SK-N-SH (cell line): ENCODE measurements at regions of chr15 and their contacts with region 1.

Region 1: DNA sequence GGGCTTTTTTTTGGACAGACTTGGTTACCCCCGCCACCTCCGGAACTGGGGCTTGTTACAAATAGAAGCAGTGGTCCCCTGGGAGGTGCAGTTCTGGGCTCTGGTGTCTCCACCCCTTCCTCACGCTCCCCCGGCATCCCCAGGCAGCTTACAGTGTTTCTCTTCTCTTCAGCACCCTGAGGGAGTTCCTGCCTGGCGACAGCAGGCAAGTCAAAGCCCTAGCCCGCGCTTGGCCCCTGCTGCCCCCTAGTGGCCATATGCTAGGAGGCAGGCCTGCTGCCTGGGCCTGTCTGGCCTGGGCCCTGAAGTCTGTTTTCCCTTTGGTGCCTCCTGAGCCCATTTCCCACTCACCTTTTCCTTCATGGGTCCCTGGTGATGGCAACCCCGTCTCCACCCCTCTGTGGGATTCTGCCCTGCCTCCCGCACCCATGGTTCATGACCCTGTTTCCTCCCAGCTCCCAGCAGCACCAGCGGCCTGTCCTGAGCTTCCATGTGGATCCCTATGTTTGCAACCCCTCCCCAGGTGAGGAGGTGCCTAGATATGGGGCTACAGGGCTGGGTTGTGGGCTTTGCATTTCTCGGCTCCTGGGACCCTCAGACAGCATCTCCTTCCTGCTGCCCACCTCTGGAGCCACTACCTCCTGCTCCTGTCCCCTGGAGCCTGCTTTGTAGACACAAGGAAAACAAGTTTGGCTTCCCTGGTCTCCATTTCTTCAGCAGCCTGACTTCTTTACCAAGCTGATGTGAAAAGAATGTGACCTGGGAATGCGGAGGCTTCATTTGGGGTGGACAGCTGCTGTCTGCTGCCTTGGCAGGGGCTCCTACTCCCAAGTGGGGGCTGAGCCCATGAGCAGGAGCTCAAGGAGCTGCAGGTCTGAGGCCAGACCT is 2.2 kb downstream of the SNX22 start:
- DNase-seq: peak; percentile 92
- H3K4me3 ChIP-seq: no peak overlapping the region; a peak in 1 of 4 replicates
- H3K27ac ChIP-seq: peak overlapping the region; percentile 35 to 63
- H3K4me1 ChIP-seq: peaks cover 0 to 22% of the 10 kb centered on the region in 2 experiments; a peak in 1 of 4 replicates
- H3K27me3 ChIP-seq: no peaks in the 10 kb centered on the region
- CTCF ChIP-seq: peak; percentile 96
- EP300 ChIP-seq: no peak
- RAD21 ChIP-seq: peak; percentile 89

Region 2: GRCh38 chr15:62828364-62828763 is 1325.4 kb before region 1 on chr15:
- CTCF ChIA-PET with region 1: no interaction called
- POLR2A ChIA-PET with region 1: no interaction called
- DNase-seq: no peak
- H3K4me3 ChIP-seq: no peak overlapping the region
- H3K27ac ChIP-seq: no peak overlapping the region
- H3K4me1 ChIP-seq: peaks cover 5 to 6% of the 10 kb centered on the region in 2 experiments; a peak in 1 of 4 replicates
- H3K27me3 ChIP-seq: no peaks in the 10 kb centered on the region
- CTCF ChIP-seq: no peak
- EP300 ChIP-seq: no peak
- RAD21 ChIP-seq: no peak

Region 3: DNA sequence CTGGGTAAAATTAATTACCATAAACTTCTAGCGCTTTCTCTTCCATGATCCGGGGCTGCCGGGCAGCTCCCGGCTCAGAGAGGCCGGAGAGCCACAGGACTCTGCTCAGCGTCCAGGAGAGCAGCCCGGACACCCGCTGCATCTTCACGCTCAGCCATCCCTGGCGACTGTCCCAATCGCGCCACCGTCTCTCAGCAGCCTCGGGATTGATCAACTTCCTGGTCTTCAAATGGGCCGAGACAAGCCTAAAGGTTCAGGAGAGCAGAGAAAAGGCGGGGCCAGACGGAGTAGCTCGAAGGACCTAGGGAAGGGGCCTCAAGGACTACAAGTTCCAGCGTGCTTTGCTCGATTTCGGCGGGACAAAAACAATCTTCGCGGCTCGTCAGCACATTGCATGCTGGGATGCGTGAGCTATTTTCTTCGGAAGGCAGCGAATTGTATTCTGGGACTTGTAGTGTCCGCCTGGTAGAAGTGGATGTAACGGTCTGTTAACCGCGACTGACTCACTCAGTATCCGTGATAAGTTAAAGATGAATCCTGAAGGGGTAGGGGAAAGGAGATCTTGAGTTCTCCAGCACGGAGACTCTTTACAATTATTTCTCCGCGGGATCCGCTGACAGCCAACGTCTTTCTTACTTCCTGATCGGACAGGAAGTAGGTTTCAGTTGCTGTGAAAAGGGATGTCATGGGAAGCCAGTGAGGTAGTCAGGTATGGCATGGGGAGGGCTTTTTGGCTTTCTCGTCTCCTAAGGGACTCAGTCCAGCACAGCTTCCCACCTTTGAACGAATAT is 59.9 kb before region 1 on chr15 and contains the start of gene CIAO2A:
- CTCF ChIA-PET with region 1: interaction called, 19 read pairs
- POLR2A ChIA-PET with region 1: interaction called, 4 read pairs
- DNase-seq: peak; percentile 81
- H3K4me3 ChIP-seq: peak within 1 kb of the TSS; percentile 91 to 99
- H3K27ac ChIP-seq: peak within 1 kb of the TSS; percentile 94 to 98
- H3K4me1 ChIP-seq: peaks cover 17 to 23% of the 10 kb centered on the region in 2 experiments; a peak in 3 of 4 replicates
- H3K27me3 ChIP-seq: no peaks in the 10 kb centered on the region
- CTCF ChIP-seq: no peak
- EP300 ChIP-seq: no peak
- RAD21 ChIP-seq: no peak
- polyA plus RNA-seq, gene CIAO2A: 53.0 and 65.3 TPM in 2 replicates

Region 4: DNA sequence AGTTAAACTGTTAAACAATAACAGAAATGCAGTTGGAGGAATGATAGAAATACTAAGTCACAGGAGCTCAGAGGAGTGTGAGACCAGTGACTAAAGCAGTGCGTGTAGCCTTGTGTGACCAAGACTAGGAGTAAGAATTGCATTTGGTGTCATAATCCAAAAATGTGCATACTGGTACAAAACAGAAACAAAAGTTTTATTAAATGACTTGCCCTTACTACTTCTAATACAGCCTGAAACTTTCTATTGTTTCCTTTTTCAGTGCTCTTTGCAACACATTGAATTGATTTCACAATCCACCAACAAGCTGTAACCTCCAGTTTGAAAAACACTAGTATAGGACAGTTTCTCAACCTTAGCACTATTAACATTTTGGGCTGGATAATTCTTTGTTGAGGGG is 40.8 kb before region 1 on chr15:
- CTCF ChIA-PET with region 1: interaction called, 11 read pairs
- POLR2A ChIA-PET with region 1: no interaction called
- DNase-seq: no peak
- H3K4me3 ChIP-seq: no peak overlapping the region
- H3K27ac ChIP-seq: no peak overlapping the region
- H3K4me1 ChIP-seq: no peaks in the 10 kb centered on the region; a peak in 2 of 4 replicates
- H3K27me3 ChIP-seq: no peaks in the 10 kb centered on the region
- CTCF ChIP-seq: no peak
- EP300 ChIP-seq: no peak
- RAD21 ChIP-seq: no peak

Region 5: DNA sequence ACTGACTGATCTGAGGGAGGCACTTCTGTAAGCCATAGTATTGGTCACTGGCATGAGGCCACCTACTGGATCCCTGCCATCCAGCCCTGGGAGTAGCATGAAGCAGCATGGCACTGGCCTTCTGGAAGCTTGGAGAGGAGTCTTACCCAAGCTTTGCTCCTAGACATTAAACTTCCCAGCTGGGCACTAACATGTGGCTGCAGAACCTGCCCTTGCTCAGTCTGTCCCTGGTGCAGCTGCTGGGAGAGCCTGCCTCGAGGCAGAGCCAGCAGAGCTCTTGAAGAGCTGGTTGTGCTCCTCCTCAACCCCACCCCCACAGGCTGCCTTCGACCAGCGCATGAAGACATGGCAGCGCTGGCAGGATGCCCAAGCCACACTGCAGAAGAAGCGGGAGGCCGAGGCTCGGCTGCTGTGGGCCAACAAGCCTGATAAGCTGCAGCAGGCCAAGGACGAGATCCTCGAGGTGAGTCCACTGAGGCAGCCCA is 19.3 kb before region 1 on chr15:
- CTCF ChIA-PET with region 1: interaction called, 25 read pairs
- POLR2A ChIA-PET with region 1: no interaction called
- DNase-seq: no peak
- H3K4me3 ChIP-seq: no peak overlapping the region
- H3K27ac ChIP-seq: no peak overlapping the region; a peak in 1 of 4 replicates
- H3K4me1 ChIP-seq: peaks cover 0 to 4% of the 10 kb centered on the region in 2 experiments; a peak in 1 of 4 replicates
- H3K27me3 ChIP-seq: no peaks in the 10 kb centered on the region
- CTCF ChIP-seq: no peak
- EP300 ChIP-seq: no peak
- RAD21 ChIP-seq: no peak